Transverse colon (tissue), 4 donors: ENCODE measurements at regions of chr2 and their contacts with region 1.

Region 1: GRCh38 chr2:205280596-205281236 is 401.6 kb upstream of the NRP2 start:
- DNase-seq: no peak
- H3K4me3 ChIP-seq: no peak overlapping the region
- H3K27ac ChIP-seq: no peak overlapping the region
- H3K4me1 ChIP-seq: no peaks in the 10 kb centered on the region
- H3K27me3 ChIP-seq: no peaks in the 10 kb centered on the region
- CTCF ChIP-seq: no peak
- EP300 ChIP-seq: no peak
- POLR2A ChIP-seq: no peak

Region 2: DNA sequence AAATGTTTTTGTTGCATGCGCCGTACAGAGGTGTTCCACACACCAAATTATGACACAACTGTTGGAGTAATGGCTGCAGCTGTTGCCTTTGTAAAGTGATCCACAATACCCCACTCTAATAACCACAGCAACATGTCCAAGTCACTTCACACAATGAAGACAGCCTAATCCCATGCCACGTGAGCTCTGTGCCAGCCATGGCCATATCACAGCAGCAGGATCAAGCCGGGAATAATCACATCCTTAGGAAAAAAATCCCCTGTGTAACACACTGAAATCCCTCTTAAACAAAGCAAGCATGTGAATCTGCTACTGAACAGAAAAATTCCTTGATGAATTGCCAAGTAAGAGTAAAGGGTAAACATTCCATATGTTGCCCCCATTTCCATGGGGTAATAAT is 914.9 kb before region 1 on chr2:
- in situ Hi-C with region 1: no loop called
- intact Hi-C with region 1: no loop called
- DNase-seq: no peak
- H3K4me3 ChIP-seq: no peak overlapping the region
- H3K27ac ChIP-seq: no peak overlapping the region
- H3K4me1 ChIP-seq: no peaks in the 10 kb centered on the region
- H3K27me3 ChIP-seq: no peaks in the 10 kb centered on the region
- CTCF ChIP-seq: no peak
- EP300 ChIP-seq: no peak
- POLR2A ChIP-seq: no peak

Region 3: DNA sequence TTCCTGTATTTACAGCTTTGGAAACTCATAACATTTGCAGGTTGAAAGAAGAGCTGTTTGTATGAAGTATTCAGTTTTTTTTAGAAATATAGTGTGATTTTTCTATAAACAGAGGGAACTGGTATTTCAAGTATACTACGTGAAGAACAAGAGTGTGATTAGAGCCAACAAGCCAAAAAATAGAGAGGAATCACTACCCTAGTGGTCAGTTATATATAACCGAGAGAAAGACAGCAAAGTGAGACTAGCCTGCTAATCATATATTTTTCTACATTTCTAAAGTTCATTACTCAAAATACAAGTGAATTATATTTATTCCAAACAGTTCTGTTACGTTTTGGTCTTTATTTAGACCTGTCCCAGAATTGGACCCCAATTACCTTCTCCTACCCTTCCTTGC is 43.2 kb before region 1 on chr2:
- in situ Hi-C with region 1: no loop called
- intact Hi-C with region 1: loop called (anchors 2 kb)
- DNase-seq: no peak
- H3K4me3 ChIP-seq: no peak overlapping the region
- H3K27ac ChIP-seq: no peak overlapping the region
- H3K4me1 ChIP-seq: no peaks in the 10 kb centered on the region
- H3K27me3 ChIP-seq: no peaks in the 10 kb centered on the region
- CTCF ChIP-seq: no peak
- EP300 ChIP-seq: no peak
- POLR2A ChIP-seq: no peak

Region 4: DNA sequence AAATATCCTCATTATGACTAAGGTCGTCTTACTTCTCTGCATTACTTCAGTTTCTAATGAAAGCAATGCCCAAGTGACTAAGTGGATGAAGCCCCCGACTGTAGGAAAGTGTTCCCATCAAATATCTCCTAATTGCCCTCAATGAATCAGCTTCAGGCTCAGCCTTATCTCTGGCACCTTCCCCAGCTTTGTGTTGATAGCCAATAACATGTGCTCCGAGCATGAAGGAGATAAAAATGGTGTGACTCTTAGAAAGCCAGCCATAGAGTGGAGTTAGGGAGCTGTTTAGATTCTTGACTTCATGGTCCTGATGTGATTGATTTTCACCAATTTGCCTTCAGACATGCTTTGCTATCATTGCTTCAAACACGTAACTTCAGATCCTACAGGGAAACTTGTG is 62.4 kb after region 1 on chr2:
- in situ Hi-C with region 1: no loop called
- intact Hi-C with region 1: no loop called
- DNase-seq: no peak
- H3K4me3 ChIP-seq: no peak overlapping the region
- H3K27ac ChIP-seq: no peak overlapping the region
- H3K4me1 ChIP-seq: no peaks in the 10 kb centered on the region
- H3K27me3 ChIP-seq: no peaks in the 10 kb centered on the region
- CTCF ChIP-seq: no peak
- EP300 ChIP-seq: no peak
- POLR2A ChIP-seq: no peak

Region 5: GRCh38 chr2:206112846-206113547 is 832.3 kb after region 1 on chr2:
- in situ Hi-C with region 1: no loop called
- intact Hi-C with region 1: no loop called
- DNase-seq: no peak
- H3K4me3 ChIP-seq: no peak overlapping the region
- H3K27ac ChIP-seq: no peak overlapping the region
- H3K4me1 ChIP-seq: no peaks in the 10 kb centered on the region
- H3K27me3 ChIP-seq: no peaks in the 10 kb centered on the region
- CTCF ChIP-seq: no peak
- EP300 ChIP-seq: no peak
- POLR2A ChIP-seq: no peak